Transverse colon (tissue), 4 donors: ENCODE measurements at regions of chrX and their contacts with region 1.

Region 1: DNA sequence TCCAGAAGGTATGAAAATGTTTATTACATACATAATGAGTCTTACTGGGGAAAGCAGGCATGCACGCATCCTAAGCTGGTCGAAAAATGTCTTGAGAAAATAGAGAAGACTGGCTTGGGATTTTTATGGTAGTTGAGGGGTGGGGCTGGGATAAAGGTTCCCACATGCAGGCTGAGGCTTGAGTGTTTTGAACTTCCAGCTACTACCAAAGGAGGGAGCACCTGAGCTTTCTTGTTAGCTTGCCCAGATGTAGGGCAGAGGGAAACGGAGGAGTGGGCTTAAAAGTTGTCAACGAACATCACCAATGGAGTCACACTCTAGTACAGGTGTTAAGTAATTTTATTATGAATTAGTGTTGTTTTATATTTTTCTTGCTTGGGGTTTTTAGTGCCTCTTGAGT is 39.6 kb upstream of the SRPX start:
- DNase-seq: peak; percentile 25
- H3K4me3 ChIP-seq: no peak overlapping the region
- H3K27ac ChIP-seq: no peak overlapping the region
- H3K4me1 ChIP-seq: no peaks in the 10 kb centered on the region
- H3K27me3 ChIP-seq: no peaks in the 10 kb centered on the region
- CTCF ChIP-seq: peak; percentile 20 to 28 (median 21)
- EP300 ChIP-seq: no peak
- POLR2A ChIP-seq: no peak

Region 2: GRCh38 chrX:38357747-38358673 is 97.8 kb after region 1 on chrX:
- in situ Hi-C with region 1: loop called in 1 of 4 experiments (anchors 25 kb)
- intact Hi-C with region 1: no loop called
- DNase-seq: no peak
- H3K4me3 ChIP-seq: no peak overlapping the region
- H3K27ac ChIP-seq: no peak overlapping the region
- H3K4me1 ChIP-seq: no peaks in the 10 kb centered on the region
- H3K27me3 ChIP-seq: no peaks in the 10 kb centered on the region
- CTCF ChIP-seq: no peak
- EP300 ChIP-seq: no peak
- POLR2A ChIP-seq: no peak

Region 3: GRCh38 chrX:38768079-38768478 is 507.8 kb after region 1 on chrX:
- in situ Hi-C with region 1: no loop called
- intact Hi-C with region 1: loop called (anchors 5 kb)
- DNase-seq: no peak
- H3K4me3 ChIP-seq: no peak overlapping the region
- H3K27ac ChIP-seq: no peak overlapping the region
- H3K4me1 ChIP-seq: no peaks in the 10 kb centered on the region
- H3K27me3 ChIP-seq: no peaks in the 10 kb centered on the region
- CTCF ChIP-seq: peak in 4 of 5 experiments; percentile 18 to 46 (median 38)
- EP300 ChIP-seq: no peak
- POLR2A ChIP-seq: no peak